Activated CD8-positive, alpha-beta T cell treated with anti-CD3 and anti-CD28 coated beads for 36 hours (primary cell): ENCODE measurements at regions of chr6 and their contacts with region 1.

Region 1: DNA sequence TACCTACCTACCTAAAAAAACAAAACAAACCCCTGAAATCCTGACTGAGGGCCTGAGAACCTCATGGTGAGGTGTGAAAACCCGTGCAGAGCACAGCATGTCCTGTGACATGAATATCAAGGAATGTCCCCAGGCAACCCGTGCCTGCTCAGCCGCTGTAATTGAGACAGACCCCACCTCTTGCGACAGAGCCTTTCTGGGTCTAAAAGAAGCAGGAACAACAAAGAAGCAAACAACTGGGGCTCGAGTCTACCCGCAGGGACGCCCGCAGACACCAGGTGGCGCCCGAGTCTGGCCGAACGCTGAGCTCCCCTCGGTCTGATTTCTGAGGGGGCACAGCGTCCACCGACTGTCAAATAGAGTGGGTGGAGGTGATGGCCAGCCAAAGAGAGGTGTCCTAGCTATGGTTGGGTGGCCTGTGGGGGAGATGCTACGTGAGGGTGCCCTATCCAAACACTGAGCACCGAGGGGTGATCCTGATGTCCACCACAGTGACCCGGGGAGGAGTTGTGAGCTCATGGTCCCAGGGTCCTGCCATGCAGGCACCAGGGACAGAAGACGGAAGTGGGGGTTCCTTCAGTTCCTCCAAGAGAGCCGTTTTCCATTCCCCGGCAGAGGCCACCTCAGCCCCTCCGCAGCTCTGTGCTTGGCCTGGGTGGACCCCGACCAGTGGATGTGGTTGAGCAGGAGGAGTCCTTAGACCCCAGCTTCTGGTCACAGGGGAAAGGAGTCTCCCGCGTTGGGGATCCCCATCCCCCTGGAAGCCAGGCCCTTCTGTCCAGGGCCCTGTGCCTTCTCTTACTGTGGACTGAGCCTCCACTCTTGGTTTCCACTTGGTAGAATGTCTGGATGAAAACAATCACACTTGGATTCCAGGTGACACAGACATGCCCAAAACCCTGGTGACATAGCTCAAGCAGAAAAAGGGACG is 268.2 kb downstream of the CDC5L start:
- DNase-seq: peak; percentile 84
- ATAC-seq: peak; percentile 94
- H3K4me3 Mint-ChIP-seq: no peak overlapping the region
- H3K27ac Mint-ChIP-seq: peak overlapping the region; percentile 67
- H3K4me1 Mint-ChIP-seq: peaks cover 7% of the 10 kb centered on the region
- H3K27me3 Mint-ChIP-seq: peaks cover 3% of the 10 kb centered on the region
- CTCF ChIP-seq: peak; percentile 95

Region 2: GRCh38 chr6:44630125-44631028 is 25.3 kb before region 1 on chr6:
- CTCF ChIA-PET with region 1: interaction called, 12 read pairs
- POLR2A ChIA-PET with region 1: no interaction called
- intact Hi-C with region 1: no loop called
- DNase-seq: peak; percentile 50
- ATAC-seq: peak; percentile 56
- H3K4me3 Mint-ChIP-seq: no peak overlapping the region
- H3K27ac Mint-ChIP-seq: no peak overlapping the region
- H3K4me1 Mint-ChIP-seq: peaks cover 6% of the 10 kb centered on the region
- H3K27me3 Mint-ChIP-seq: no peaks in the 10 kb centered on the region
- CTCF ChIP-seq: peak; percentile 39

Region 3: DNA sequence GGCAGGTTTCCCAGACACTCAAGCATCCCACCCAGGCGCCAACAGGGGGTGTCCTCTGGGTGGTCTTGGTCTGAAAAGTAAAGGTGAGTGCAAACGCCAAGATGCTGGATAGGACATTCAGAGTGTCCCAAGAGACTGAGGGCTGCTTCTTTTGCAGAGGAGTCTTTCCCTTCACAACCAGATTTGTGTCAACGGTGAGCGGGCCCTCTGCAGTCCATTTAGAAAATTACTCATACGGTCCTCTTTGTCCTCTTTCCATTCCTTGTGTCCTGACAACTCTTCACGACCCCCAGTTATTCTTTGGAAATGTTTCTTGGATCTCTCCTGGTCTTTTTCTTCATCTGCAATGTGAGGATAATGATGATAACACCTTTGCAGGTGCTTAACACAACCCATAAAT is 10.4 kb before region 1 on chr6:
- CTCF ChIA-PET with region 1: interaction called, 23 read pairs
- POLR2A ChIA-PET with region 1: interaction called, 3 read pairs
- intact Hi-C with region 1: no loop called
- DNase-seq: peak; percentile 13
- ATAC-seq: no peak
- H3K4me3 Mint-ChIP-seq: no peak overlapping the region
- H3K27ac Mint-ChIP-seq: no peak overlapping the region
- H3K4me1 Mint-ChIP-seq: peaks cover 32% of the 10 kb centered on the region
- H3K27me3 Mint-ChIP-seq: peaks cover 3% of the 10 kb centered on the region
- CTCF ChIP-seq: no peak

Region 4: GRCh38 chr6:44674351-44675155 is 18.9 kb after region 1 on chr6:
- CTCF ChIA-PET with region 1: interaction called, 13 read pairs
- POLR2A ChIA-PET with region 1: no interaction called
- intact Hi-C with region 1: no loop called
- DNase-seq: no peak
- ATAC-seq: no peak
- H3K4me3 Mint-ChIP-seq: no peak overlapping the region
- H3K27ac Mint-ChIP-seq: no peak overlapping the region
- H3K4me1 Mint-ChIP-seq: no peaks in the 10 kb centered on the region
- H3K27me3 Mint-ChIP-seq: peaks cover 4% of the 10 kb centered on the region
- CTCF ChIP-seq: no peak

Region 5: GRCh38 chr6:44704240-44705150 is 48.8 kb after region 1 on chr6:
- CTCF ChIA-PET with region 1: no interaction called
- POLR2A ChIA-PET with region 1: no interaction called
- intact Hi-C with region 1: no loop called
- DNase-seq: peak; percentile 65
- ATAC-seq: peak; percentile 86
- H3K4me3 Mint-ChIP-seq: no peak overlapping the region
- H3K27ac Mint-ChIP-seq: peak overlapping the region; percentile 82
- H3K4me1 Mint-ChIP-seq: peaks cover 31% of the 10 kb centered on the region
- H3K27me3 Mint-ChIP-seq: no peaks in the 10 kb centered on the region
- CTCF ChIP-seq: no peak

Region 6: DNA sequence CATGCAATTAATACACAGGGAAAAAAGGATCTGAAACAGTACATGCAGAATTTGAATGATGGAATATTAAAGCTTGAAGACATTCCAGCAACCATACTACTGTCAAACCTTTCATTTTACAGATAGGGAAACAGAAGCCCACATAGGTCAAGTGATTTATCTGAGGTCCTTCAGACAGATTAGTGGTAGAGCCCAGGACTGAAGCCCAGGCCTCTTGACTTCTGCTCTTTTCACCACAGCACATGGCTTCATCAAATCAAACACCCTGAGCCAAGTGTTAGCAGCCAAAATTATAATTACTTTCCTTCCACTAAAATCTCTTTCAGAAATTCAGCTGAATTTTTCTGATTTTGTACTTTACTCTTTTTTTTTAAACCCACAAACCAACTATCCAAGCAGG is 236.9 kb after region 1 on chr6:
- CTCF ChIA-PET with region 1: no interaction called
- POLR2A ChIA-PET with region 1: no interaction called
- intact Hi-C with region 1: no loop called
- DNase-seq: no peak
- ATAC-seq: no peak
- H3K4me3 Mint-ChIP-seq: no peak overlapping the region
- H3K27ac Mint-ChIP-seq: no peak overlapping the region
- H3K4me1 Mint-ChIP-seq: no peaks in the 10 kb centered on the region
- H3K27me3 Mint-ChIP-seq: no peaks in the 10 kb centered on the region
- CTCF ChIP-seq: no peak

Region 7: DNA sequence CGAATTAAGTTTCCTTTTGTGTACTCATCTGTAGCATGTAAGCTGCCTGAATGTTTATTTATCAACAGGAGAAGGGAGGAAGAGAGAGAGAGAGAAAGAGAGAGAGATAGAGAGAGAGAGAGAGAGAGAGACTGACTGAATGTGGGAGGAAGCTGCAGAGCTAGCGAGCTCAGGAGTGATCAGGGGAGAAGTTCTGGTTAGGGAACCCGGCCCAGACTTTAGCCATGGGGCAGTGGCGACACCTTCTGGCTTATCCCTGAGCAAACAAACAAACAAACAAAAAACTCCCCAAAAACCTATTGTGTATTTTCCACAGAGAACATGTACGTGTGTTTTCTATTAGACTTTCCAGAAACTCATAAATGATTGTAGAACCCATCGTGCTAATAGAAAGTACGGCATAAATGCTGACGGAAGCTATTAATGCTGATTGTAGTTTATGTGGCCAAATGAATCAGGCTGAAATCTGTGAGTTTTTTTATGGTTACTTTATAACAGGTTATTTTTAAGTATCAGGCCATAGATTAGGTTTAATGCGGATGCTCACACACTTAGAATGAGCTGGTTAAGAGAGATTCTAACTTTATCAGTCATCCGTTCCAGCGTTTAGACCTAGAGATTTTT is 1267.2 kb after region 1 on chr6:
- CTCF ChIA-PET with region 1: interaction called, 25 read pairs
- POLR2A ChIA-PET with region 1: interaction called, 4 read pairs
- intact Hi-C with region 1: loop called (anchors 10 kb)
- DNase-seq: peak; percentile 77
- ATAC-seq: peak; percentile 20
- H3K4me3 Mint-ChIP-seq: no peak overlapping the region
- H3K27ac Mint-ChIP-seq: peak overlapping the region; percentile 55
- H3K4me1 Mint-ChIP-seq: peaks cover 46% of the 10 kb centered on the region
- H3K27me3 Mint-ChIP-seq: peaks cover 2% of the 10 kb centered on the region
- CTCF ChIP-seq: peak; percentile 82